ENCODE measurements at regions of chr3 and their contacts with region 1.

Region 1: DNA sequence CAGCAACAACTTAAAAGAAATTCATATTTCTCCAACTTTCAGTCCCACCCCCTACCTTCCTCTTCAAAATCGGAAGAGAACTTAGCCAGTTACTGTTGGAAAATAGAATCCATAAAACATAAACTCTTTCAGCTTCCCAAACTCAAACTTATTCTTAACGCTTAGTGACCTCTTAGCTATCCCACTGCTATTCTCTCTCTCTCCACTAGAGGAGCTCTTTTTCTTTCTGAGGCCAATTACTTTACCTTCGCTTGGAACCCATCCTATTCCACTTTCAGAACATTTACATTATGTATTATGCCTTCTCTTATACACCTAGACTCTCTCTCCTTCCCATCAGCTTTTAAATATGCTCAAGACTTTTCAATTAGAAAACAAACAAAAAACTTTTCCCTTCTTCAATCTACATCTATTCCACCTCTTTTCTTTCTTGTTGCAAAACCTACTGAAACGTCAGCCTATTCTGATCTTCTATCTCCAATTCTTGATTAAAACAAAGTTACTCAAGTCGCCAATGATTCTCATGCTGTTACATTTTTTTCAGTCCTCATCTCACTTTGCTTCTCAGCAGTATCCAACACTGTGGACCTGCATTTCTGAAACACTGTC is 13.4 kb upstream of the GHSR start:
- DNase-seq: no peak
- H3K4me3 Mint-ChIP-seq: no peak overlapping the region
- H3K27ac Mint-ChIP-seq: no peak overlapping the region
- H3K4me1 Mint-ChIP-seq: no peaks in the 10 kb centered on the region
- H3K27me3 Mint-ChIP-seq: peaks cover 5% of the 10 kb centered on the region

Region 2: GRCh38 chr3:172256101-172256734 is 205.4 kb before region 1 on chr3:
- CTCF ChIA-PET with region 1: no interaction called
- DNase-seq: no peak
- H3K4me3 Mint-ChIP-seq: no peak overlapping the region
- H3K27ac Mint-ChIP-seq: no peak overlapping the region
- H3K4me1 Mint-ChIP-seq: no peaks in the 10 kb centered on the region
- H3K27me3 Mint-ChIP-seq: no peaks in the 10 kb centered on the region

Region 3: DNA sequence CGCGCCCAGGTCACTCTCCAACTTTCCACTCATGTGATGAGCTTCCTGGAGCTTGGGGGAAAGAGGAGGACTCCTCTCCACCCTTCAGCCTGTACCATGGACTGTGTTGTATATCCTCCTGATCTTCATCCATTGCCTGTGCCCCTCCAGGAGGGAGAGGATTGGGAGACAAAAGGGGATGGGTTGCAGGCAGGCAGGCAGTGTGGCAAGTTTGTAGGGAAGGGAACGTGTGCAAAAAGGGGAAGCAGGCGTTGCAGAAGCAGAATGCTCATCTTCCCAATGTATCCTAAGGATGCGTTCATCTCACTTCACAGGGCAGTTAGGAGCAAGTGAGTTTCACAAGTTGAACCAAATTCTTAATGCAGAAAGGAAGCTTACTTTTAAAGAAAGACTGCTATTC is 14.7 kb after region 1 on chr3:
- CTCF ChIA-PET with region 1: interaction called, 36 read pairs
- DNase-seq: no peak
- H3K4me3 Mint-ChIP-seq: peak overlapping the region; percentile 11
- H3K27ac Mint-ChIP-seq: no peak overlapping the region
- H3K4me1 Mint-ChIP-seq: peaks cover 11% of the 10 kb centered on the region
- H3K27me3 Mint-ChIP-seq: peaks cover 8% of the 10 kb centered on the region

Region 4: GRCh38 chr3:173258697-173259096 is 797.1 kb after region 1 on chr3:
- CTCF ChIA-PET with region 1: no interaction called
- DNase-seq: no peak
- H3K4me3 Mint-ChIP-seq: no peak overlapping the region
- H3K27ac Mint-ChIP-seq: no peak overlapping the region
- H3K4me1 Mint-ChIP-seq: no peaks in the 10 kb centered on the region
- H3K27me3 Mint-ChIP-seq: no peaks in the 10 kb centered on the region

Measured in activated naive CD4-positive, alpha-beta T cell treated with anti-CD3 and anti-CD28 coated beads, Interleukin-2, amount 10 ng/mL, durations not matched to agents 7 days and 5 days (primary cell).